ENCODE measurements at regions of chr11 and their contacts with region 1.

Region 1: GRCh38 chr11:68383976-68384501 is 71.6 kb downstream of the LRP5 start:
- DNase-seq: peak in 4 of 5 donors; percentile 62 to 75 (median 70)
- ATAC-seq: peak in 3 of 4 donors; percentile 9 to 30 (median 23)
- H3K4me3 ChIP-seq: no peak overlapping the region
- H3K27ac ChIP-seq: peak overlapping the region in 4 of 12 donors; percentile 15 to 84 (median 74)
- H3K4me1 ChIP-seq: peaks cover 8 to 53% (median 46%) of the 10 kb centered on the region in 12 donors
- H3K27me3 ChIP-seq: no peaks in the 10 kb centered on the region
- CTCF ChIP-seq: peak; percentile 84 to 95 (median 93)
- POLR2A ChIP-seq: no peak

Region 2: DNA sequence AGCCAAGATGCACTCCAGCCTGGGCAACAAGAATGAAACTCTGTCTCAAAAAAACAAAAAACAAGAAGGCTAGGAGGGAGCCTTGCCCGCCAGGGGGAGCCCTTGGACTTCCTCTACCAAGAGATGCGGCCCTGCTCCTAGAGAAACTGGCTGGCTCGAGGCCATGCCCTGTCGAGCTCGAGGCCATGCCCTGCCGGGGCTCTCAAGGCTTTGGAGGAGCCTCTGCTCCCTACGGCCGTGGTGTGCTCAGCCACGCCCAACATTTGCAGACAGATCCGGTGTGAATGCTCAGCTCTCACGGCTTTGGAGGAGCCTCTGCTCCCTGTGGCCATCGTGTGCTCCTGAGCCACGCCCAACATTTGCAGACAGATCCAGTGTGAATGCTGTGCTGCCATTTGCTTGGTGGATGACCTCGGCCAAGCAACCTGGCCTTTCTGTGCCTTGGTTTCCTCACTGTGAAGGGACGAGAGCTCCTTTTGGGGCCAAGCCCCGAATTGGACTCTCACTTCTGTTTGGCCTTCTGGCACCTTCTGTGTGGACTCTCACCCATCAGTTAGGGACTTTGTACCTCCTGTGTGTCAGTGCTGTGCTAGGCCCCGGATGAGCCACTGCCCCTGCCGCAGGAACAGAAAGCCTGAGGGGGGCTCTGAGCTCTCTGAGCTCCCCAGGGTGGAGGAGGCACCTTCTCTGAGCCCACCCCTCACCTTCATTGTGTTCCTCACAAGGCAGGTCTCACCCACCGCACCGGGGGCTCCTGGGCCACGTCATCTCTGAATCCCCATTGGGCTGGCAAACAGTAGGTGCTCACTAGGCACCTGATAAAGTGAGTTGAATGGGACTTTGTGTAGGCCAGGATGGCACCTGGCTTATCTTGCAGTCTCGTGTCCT is 126.3 kb before region 1 on chr11:
- intact Hi-C with region 1: loop called (anchors 1 to 5 kb)
- DNase-seq: peak; percentile 92 to 97 (median 96)
- ATAC-seq: peak; percentile 61 to 88 (median 84)
- H3K4me3 ChIP-seq: peak overlapping the region in 5 of 12 donors; percentile 18 to 38 (median 26)
- H3K27ac ChIP-seq: peak overlapping the region in 2 of 12 donors; percentile 17 to 39
- H3K4me1 ChIP-seq: peaks cover 0 to 24% (median 8%) of the 10 kb centered on the region in 12 donors
- H3K27me3 ChIP-seq: no peaks in the 10 kb centered on the region
- CTCF ChIP-seq: peak; percentile 83 to 93 (median 89)
- POLR2A ChIP-seq: no peak

Region 3: GRCh38 chr11:68271781-68272608 is 112.0 kb before region 1 on chr11 and contains the start of gene C11orf24:
- intact Hi-C with region 1: loop called in 3 of 10 experiments (anchors 5 kb)
- DNase-seq: peak; percentile 96 to 99 (median 96)
- ATAC-seq: peak; percentile 94 to 98 (median 97)
- H3K4me3 ChIP-seq: peak within 1 kb of the TSS; percentile 52 to 95 (median 82)
- H3K27ac ChIP-seq: peak within 1 kb of the TSS; percentile 85 to 99 (median 96)
- H3K4me1 ChIP-seq: peaks cover 8 to 43% (median 31%) of the 10 kb centered on the region in 12 donors
- H3K27me3 ChIP-seq: no peaks in the 10 kb centered on the region
- CTCF ChIP-seq: no peak
- POLR2A ChIP-seq: peak in 1 of 2 donors; percentile 88
- total RNA-seq, gene C11orf24: 17.6 to 47.1 (median 31.6) TPM

Region 4: GRCh38 chr11:68297812-68298658 is 86.0 kb before region 1 on chr11:
- intact Hi-C with region 1: loop called in 5 of 10 experiments (anchors 2 to 5 kb)
- DNase-seq: peak; percentile 77 to 92 (median 80)
- ATAC-seq: peak; percentile 93 to 97 (median 96)
- H3K4me3 ChIP-seq: peak overlapping the region in 5 of 12 donors; percentile 3 to 28 (median 10)
- H3K27ac ChIP-seq: no peak overlapping the region
- H3K4me1 ChIP-seq: peaks cover 0 to 22% (median 12%) of the 10 kb centered on the region in 12 donors
- H3K27me3 ChIP-seq: no peaks in the 10 kb centered on the region
- CTCF ChIP-seq: peak in 11 of 12 donors; percentile 94 to 99 (median 98)
- POLR2A ChIP-seq: no peak

Region 5: GRCh38 chr11:68312117-68312779 is 71.8 kb before region 1 on chr11 and contains the start of gene LRP5:
- intact Hi-C with region 1: loop called in 9 of 10 experiments (anchors 2 to 5 kb)
- DNase-seq: peak in 2 of 5 donors; percentile 31 to 46
- ATAC-seq: peak in 2 of 4 donors; percentile 21 to 22
- H3K4me3 ChIP-seq: peak within 1 kb of the TSS; percentile 25 to 94 (median 72)
- H3K27ac ChIP-seq: peak within 1 kb of the TSS; percentile 47 to 93 (median 84)
- H3K4me1 ChIP-seq: peaks cover 0 to 51% (median 37%) of the 10 kb centered on the region in 12 donors
- H3K27me3 ChIP-seq: peaks cover 0 to 3% (median 0%) of the 10 kb centered on the region in 9 donors
- CTCF ChIP-seq: no peak
- POLR2A ChIP-seq: no peak
- total RNA-seq, gene LRP5: 34.5 to 62.5 (median 39.8) TPM

Region 6: DNA sequence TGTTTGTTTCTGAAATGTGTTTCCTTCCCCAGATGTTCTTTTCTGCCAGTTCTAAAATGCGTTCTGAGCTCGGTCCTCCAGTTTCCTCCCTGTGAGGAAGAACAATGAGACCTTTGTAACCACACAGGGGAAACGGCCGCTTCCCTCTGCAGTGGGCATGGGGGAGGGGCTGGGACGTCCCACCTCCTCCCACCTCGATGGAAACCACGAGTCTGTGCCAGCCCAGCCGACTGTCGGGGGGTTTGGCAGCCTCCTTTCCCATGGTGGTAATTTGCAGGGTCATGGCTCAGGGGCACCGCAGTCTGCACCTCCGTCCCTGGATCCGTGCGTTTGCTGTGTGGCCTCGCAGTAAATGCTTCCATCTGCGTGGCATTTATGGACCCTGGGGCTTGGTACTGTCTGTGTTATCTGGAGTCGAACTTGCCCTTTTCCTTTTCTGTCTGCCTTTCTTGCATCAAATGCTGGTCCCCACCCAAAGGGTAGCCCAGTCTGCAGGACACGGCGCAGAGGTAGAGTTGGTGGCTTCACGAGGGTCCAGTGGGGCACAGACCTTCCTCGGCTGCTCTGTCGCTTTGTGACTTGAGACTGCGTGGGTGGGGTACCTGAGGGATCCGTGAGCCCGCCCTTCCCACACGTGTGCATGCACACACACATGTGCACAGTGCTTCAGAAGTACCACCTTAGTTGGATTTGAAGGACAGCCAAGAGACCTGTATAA is 55.5 kb before region 1 on chr11:
- intact Hi-C with region 1: loop called in 1 of 10 experiments (anchors 5 kb)
- DNase-seq: peak in 4 of 5 donors; percentile 61 to 75 (median 68)
- ATAC-seq: peak; percentile 31 to 55 (median 43)
- H3K4me3 ChIP-seq: peak overlapping the region in 1 of 12 donors; percentile 24
- H3K27ac ChIP-seq: peak overlapping the region in 9 of 12 donors; percentile 15 to 69 (median 34)
- H3K4me1 ChIP-seq: peaks cover 16 to 94% (median 85%) of the 10 kb centered on the region in 12 donors
- H3K27me3 ChIP-seq: no peaks in the 10 kb centered on the region
- CTCF ChIP-seq: no peak
- POLR2A ChIP-seq: no peak

Region 7: DNA sequence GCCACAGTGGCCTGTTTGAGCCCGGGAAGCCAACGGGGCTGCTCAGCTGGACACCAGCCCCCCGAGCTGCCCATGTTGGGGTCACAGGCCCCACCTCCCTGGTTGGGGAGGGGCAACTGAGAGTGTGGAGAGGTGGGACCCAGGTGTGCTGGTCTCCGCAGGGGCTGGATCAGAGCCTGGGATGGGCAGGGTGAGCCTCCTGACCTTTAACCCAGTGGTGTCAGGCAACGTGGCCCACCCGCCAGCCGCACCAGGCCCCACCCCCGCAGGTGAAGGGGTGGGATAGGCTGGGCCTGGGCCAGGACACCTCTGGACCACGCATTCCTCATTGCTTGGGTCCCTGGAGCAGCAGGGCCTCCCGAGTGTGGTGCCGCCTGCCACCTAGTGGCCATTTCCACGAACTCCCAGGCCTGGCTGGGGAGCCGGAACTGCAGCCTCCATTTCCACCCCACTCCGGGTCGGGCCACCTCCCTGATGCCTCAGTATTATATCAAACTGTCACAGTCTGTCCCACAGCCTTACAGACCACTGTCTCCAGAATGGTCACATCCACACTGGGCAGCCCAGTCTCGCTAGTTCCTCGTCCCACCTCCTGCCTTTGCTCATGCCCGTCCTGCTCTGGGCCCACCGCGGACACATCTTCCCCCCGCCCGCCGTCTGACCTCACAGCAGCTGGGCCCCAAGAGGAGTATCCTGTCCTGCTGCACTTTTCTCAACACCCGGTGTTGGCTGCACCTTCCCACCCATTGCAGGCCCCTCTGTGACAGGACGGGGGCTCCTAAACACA is 63.2 kb after region 1 on chr11:
- intact Hi-C with region 1: loop called in 1 of 10 experiments (anchors 5 kb)
- DNase-seq: peak; percentile 75 to 89 (median 79)
- ATAC-seq: peak; percentile 65 to 93 (median 90)
- H3K4me3 ChIP-seq: no peak overlapping the region
- H3K27ac ChIP-seq: peak overlapping the region in 2 of 12 donors; percentile 19 to 38
- H3K4me1 ChIP-seq: peaks cover 0 to 11% (median 1%) of the 10 kb centered on the region in 12 donors
- H3K27me3 ChIP-seq: no peaks in the 10 kb centered on the region
- CTCF ChIP-seq: peak; percentile 90 to 98 (median 96)
- POLR2A ChIP-seq: no peak